Kidney (tissue), 22 donors: ENCODE measurements at regions of chr14 and their contacts with region 1.

Region 1: GRCh38 chr14:95445676-95446075 is 70.8 kb downstream of the SYNE3 start:
- DNase-seq: no peak
- H3K4me3 ChIP-seq: no peak overlapping the region
- H3K27ac ChIP-seq: no peak overlapping the region
- H3K4me1 ChIP-seq: peaks cover 0 to 13% (median 6%) of the 10 kb centered on the region in 3 donors
- H3K27me3 ChIP-seq: no peaks in the 10 kb centered on the region
- CTCF ChIP-seq: no peak

Region 2: GRCh38 chr14:95314616-95315482 is 130.8 kb before region 1 on chr14:
- intact Hi-C with region 1: no loop called
- DNase-seq: no peak
- H3K4me3 ChIP-seq: peak overlapping the region in 1 of 3 donors; percentile 25
- H3K27ac ChIP-seq: peak overlapping the region; percentile 63 to 79
- H3K4me1 ChIP-seq: peaks cover 0 to 51% (median 45%) of the 10 kb centered on the region in 3 donors
- H3K27me3 ChIP-seq: no peaks in the 10 kb centered on the region
- CTCF ChIP-seq: peak; percentile 2

Region 3: GRCh38 chr14:95356245-95356869 is 89.3 kb before region 1 on chr14:
- intact Hi-C with region 1: no loop called
- DNase-seq: no peak
- H3K4me3 ChIP-seq: no peak overlapping the region
- H3K27ac ChIP-seq: no peak overlapping the region
- H3K4me1 ChIP-seq: peaks cover 0 to 10% (median 4%) of the 10 kb centered on the region in 3 donors
- H3K27me3 ChIP-seq: no peaks in the 10 kb centered on the region
- CTCF ChIP-seq: no peak

Region 4: DNA sequence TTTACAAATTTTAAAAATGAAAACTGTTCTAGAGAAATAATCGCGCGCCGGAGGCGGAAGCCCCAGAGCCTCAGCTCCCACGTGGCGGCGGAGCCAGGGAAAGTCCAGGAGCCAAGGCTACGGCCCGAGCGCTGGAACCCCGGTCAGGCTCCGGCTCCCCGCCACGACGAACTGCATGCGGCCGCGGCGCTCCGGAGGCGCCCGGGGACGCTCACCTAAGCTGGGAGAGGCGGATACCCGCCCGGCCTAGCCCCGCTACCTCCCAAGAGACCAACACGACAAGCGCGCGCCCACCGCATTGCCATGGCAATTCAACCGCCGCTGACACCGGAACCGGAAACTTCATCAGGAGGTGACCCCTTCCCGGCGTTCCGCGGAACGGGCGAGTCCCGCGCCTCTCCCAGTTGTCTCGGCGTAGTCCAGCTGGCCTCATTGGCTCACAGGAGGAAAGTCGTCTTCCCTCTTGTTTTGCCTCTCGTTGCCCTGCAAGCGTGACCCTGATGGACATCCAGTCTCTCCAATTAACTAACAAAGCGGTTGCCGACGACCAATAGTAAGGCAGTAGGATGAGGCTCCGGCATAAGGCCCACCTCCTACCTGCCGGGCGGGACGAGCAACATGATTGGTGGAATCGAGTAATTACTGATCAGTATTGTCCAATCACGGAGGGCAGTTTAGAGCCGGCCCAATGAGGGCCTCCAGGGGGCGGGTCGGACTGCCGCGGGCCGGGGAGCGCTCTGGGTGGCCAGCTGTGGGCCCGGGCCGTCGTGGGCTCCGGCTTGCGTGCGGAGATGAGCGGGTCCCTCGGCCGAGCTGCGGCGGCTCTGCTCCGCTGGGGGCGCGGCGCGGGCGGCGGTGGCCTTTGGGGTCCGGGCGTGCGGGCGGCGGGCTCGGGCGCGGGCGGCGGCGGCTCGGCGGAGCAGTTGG is 88.9 kb after region 1 on chr14 and contains the start of gene GLRX5:
- intact Hi-C with region 1: loop called (anchors 5 kb)
- DNase-seq: peak; percentile 99 to 100 (median 100)
- H3K4me3 ChIP-seq: peak within 1 kb of the TSS; percentile 83 to 88 (median 85)
- H3K27ac ChIP-seq: peak within 1 kb of the TSS; percentile 50 to 54
- H3K4me1 ChIP-seq: peaks cover 9 to 45% (median 31%) of the 10 kb centered on the region in 3 donors
- H3K27me3 ChIP-seq: no peaks in the 10 kb centered on the region
- CTCF ChIP-seq: peak; percentile 6
- total RNA-seq, gene GLRX5: 46.7 TPM

Region 5: DNA sequence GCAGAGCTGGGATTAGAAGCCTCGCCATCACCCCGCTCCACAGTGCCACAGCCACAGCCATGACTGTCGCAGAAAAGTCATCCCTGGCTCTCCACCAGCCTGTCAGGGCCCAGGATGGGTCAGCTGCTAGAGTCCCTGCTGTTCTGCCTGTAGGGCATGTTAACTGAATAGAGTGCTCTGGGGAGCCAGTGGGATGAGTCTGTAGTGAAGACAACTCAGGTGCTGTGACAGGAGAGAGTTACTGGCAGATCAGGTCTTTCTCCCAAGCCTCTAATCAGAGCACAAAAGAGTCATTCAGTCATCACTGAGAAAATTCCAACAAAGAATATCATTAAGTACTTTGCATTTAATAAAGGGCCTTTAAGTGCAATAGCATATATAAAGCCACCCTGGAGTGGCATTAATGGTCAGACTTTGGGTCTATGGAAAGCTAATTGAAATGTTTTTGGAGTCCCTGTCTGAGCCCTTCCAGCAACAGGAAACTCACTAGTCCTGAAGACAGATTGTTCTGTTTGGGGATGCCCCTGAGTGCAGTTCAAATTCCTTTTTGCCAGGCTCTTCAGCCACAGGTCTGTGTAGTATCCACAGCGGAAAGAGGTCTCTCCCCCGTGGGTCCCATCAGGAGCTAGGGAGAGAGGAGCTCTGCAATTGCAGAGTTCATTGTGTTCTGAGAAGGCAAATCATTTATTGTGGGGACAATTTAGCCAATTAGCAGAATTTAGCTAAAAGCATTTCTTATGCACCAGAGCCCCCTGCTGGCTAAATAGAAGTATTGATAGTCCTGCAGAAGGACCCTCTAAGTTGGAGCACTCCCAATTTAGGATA is 548.3 kb after region 1 on chr14:
- intact Hi-C with region 1: loop called (anchors 5 kb)
- DNase-seq: peak in 3 of 5 donors; percentile 31 to 85 (median 63)
- H3K4me3 ChIP-seq: no peak overlapping the region
- H3K27ac ChIP-seq: no peak overlapping the region
- H3K4me1 ChIP-seq: no peaks in the 10 kb centered on the region
- H3K27me3 ChIP-seq: no peaks in the 10 kb centered on the region
- CTCF ChIP-seq: peak; percentile 84